OCI-LY7 (cell line): ENCODE measurements at regions of chr10 and their contacts with region 1.

Region 1: GRCh38 chr10:19098803-19099202 is 50.2 kb downstream of the MALRD1 start:
- DNase-seq: no peak
- H3K4me3 ChIP-seq: no peak overlapping the region
- H3K27ac ChIP-seq: no peak overlapping the region
- H3K4me1 ChIP-seq: no peaks in the 10 kb centered on the region
- CTCF ChIP-seq: no peak

Region 2: GRCh38 chr10:19488592-19489280 is 389.9 kb after region 1 on chr10:
- CTCF ChIA-PET with region 1: no interaction called
- POLR2A ChIA-PET with region 1: interaction called, 10 read pairs
- intact Hi-C with region 1: no loop called
- DNase-seq: no peak
- H3K4me3 ChIP-seq: no peak overlapping the region
- H3K27ac ChIP-seq: no peak overlapping the region
- H3K4me1 ChIP-seq: no peaks in the 10 kb centered on the region
- CTCF ChIP-seq: no peak

Region 3: DNA sequence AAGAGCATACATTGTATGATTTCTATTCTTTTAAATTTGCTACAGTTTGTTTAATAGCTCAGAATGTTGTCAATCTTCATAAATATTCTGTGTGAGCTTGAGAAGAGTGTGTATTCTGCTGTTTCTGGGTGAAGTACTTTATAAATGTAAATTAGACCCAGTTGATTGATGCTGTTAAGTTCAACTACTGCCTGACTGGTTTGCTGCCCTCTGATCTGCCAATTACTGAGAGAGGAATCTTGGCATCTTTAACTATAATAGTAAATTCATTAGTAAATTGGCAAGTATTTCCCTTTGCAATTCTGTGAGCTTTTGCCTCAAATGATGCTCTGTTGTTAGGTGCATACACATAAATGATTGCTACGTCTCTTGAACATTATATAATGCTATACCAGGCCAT is 462.4 kb after region 1 on chr10:
- CTCF ChIA-PET with region 1: no interaction called
- POLR2A ChIA-PET with region 1: no interaction called
- intact Hi-C with region 1: no loop called
- DNase-seq: no peak
- H3K4me3 ChIP-seq: no peak overlapping the region
- H3K27ac ChIP-seq: no peak overlapping the region
- H3K4me1 ChIP-seq: no peaks in the 10 kb centered on the region
- CTCF ChIP-seq: no peak